Left ventricle myocardium inferior (tissue), 1 donor: ENCODE measurements at regions of chr11 and their contacts with region 1.

Region 1: GRCh38 chr11:15074206-15075161 is 1.1 kb downstream of the CALCB start:
- DNase-seq: peak; percentile 81
- H3K4me3 ChIP-seq: peak overlapping the region; percentile 58
- H3K27ac ChIP-seq: no peak overlapping the region
- H3K4me1 ChIP-seq: peaks cover 20% of the 10 kb centered on the region
- H3K27me3 ChIP-seq: peaks cover 85% of the 10 kb centered on the region
- CTCF ChIP-seq: peak; percentile 78

Region 2: GRCh38 chr11:14784230-14784629 is 290.3 kb before region 1 on chr11:
- intact Hi-C with region 1: no loop called
- DNase-seq: no peak
- H3K4me3 ChIP-seq: no peak overlapping the region
- H3K27ac ChIP-seq: no peak overlapping the region
- H3K4me1 ChIP-seq: peaks cover 4% of the 10 kb centered on the region
- H3K27me3 ChIP-seq: no peaks in the 10 kb centered on the region
- CTCF ChIP-seq: no peak

Region 3: DNA sequence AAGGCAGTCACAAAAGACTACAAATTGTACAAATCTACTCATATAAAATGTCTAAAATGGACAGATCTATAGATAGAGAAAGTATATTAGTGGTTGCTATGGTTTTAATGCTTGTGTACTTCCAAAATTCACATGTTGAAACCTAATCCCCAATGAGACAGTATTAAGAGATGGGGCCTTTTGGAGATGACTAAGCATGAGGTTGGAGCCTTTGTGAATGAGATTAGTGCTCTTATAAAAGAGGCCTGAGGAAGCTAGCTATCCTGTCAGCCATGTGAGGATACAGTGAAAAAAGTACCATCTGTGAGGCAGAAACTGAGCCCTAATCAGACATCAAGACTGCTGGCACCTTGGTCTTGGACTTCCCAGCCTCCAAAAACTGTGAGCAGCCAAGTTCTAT is 265.0 kb before region 1 on chr11:
- intact Hi-C with region 1: no loop called
- DNase-seq: no peak
- H3K4me3 ChIP-seq: no peak overlapping the region
- H3K27ac ChIP-seq: no peak overlapping the region
- H3K4me1 ChIP-seq: no peaks in the 10 kb centered on the region
- H3K27me3 ChIP-seq: no peaks in the 10 kb centered on the region
- CTCF ChIP-seq: no peak

Region 4: GRCh38 chr11:14914541-14914940 is 159.9 kb before region 1 on chr11:
- intact Hi-C with region 1: loop called (anchors 10 kb)
- DNase-seq: no peak
- H3K4me3 ChIP-seq: no peak overlapping the region
- H3K27ac ChIP-seq: no peak overlapping the region
- H3K4me1 ChIP-seq: no peaks in the 10 kb centered on the region
- H3K27me3 ChIP-seq: peaks cover 13% of the 10 kb centered on the region
- CTCF ChIP-seq: no peak